Upper lobe of right lung (tissue), 1 donor: ENCODE measurements at regions of chrX and their contacts with region 1.

Region 1: GRCh38 chrX:103175944-103176753 is 38.8 kb upstream of the BEX4 start:
- DNase-seq: no peak
- ATAC-seq: peak; percentile 78
- H3K4me3 ChIP-seq: no peak overlapping the region
- H3K27ac ChIP-seq: no peak overlapping the region
- H3K4me1 ChIP-seq: no peaks in the 10 kb centered on the region
- H3K27me3 ChIP-seq: no peaks in the 10 kb centered on the region
- CTCF ChIP-seq: peak; percentile 65

Region 2: DNA sequence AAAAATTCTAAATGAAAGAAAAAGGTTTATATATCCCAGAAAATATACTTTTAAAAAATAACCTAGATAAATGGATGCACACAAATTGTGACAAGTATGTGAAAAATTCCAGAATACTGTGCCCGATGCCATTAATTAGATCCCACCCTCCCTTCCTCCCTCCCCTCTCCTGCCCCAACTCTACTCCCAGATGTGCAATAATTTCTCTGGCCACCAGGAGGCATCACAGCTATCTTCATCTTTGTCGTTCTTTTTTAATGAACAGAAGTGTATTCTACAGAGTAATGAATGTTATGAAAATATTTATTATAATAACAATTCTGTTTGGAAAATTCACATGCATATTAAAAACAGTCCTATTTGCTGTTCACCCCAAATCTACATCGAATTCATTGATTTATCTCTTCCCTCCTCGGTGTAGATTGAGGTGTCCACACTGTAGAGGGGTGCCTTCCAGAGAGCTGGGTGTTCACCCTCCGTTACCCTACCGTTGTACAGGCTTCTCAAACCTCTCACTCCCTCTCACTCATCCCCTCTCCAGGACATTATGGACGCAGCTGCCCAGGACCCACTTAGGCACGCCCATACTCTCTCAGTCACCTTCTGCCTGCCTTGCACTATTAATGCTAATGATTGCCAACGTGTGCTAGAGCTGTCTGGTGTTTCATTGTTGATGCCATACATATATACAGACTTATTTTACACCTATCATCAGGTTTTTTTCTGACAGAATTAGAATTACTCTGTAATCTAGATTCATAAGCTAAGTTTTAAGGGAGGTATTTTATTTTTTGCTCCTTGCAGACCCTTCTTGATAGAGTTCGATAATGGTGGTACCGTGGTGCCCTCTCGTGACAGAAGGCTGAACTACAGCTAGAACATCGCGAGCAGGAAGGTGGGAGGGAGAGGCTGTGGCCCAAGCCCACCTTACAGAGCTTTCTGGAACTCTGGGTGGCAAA is 225.0 kb before region 1 on chrX:
- intact Hi-C with region 1: loop called (anchors 10 kb)
- DNase-seq: no peak
- ATAC-seq: peak; percentile 77
- H3K4me3 ChIP-seq: peak overlapping the region; percentile 16
- H3K27ac ChIP-seq: no peak overlapping the region
- H3K4me1 ChIP-seq: no peaks in the 10 kb centered on the region
- H3K27me3 ChIP-seq: no peaks in the 10 kb centered on the region
- CTCF ChIP-seq: peak; percentile 58

Region 3: GRCh38 chrX:103293118-103293517 is 117.0 kb after region 1 on chrX:
- intact Hi-C with region 1: no loop called
- DNase-seq: no peak
- ATAC-seq: no peak
- H3K4me3 ChIP-seq: no peak overlapping the region
- H3K27ac ChIP-seq: no peak overlapping the region
- H3K4me1 ChIP-seq: no peaks in the 10 kb centered on the region
- H3K27me3 ChIP-seq: no peaks in the 10 kb centered on the region
- CTCF ChIP-seq: no peak